ENCODE measurements at regions of chr16 and their contacts with region 1.

Region 1: GRCh38 chr16:76705892-76706291 is 428.7 kb downstream of the CNTNAP4 start:
- DNase-seq: no peak
- ATAC-seq: no peak
- H3K4me3 ChIP-seq: no peak overlapping the region
- H3K27ac ChIP-seq: no peak overlapping the region
- H3K4me1 ChIP-seq: no peaks in the 10 kb centered on the region
- H3K27me3 ChIP-seq: no peaks in the 10 kb centered on the region
- CTCF ChIP-seq: no peak
- POLR2A ChIP-seq: no peak
- RAD21 ChIP-seq: no peak

Region 2: GRCh38 chr16:76409706-76410105 is 296.2 kb before region 1 on chr16:
- CTCF ChIA-PET with region 1: no interaction called
- POLR2A ChIA-PET with region 1: no interaction called
- RAD21 ChIA-PET with region 1: no interaction called
- intact Hi-C with region 1: loop called (anchors 10 kb)
- DNase-seq: no peak
- ATAC-seq: no peak
- H3K4me3 ChIP-seq: no peak overlapping the region
- H3K27ac ChIP-seq: no peak overlapping the region
- H3K4me1 ChIP-seq: no peaks in the 10 kb centered on the region
- H3K27me3 ChIP-seq: no peaks in the 10 kb centered on the region
- CTCF ChIP-seq: no peak
- POLR2A ChIP-seq: no peak
- RAD21 ChIP-seq: no peak

Region 3: GRCh38 chr16:77059446-77059845 is 353.6 kb after region 1 on chr16:
- CTCF ChIA-PET with region 1: no interaction called
- POLR2A ChIA-PET with region 1: no interaction called
- RAD21 ChIA-PET with region 1: no interaction called
- intact Hi-C with region 1: no loop called
- DNase-seq: no peak
- ATAC-seq: no peak
- H3K4me3 ChIP-seq: no peak overlapping the region
- H3K27ac ChIP-seq: no peak overlapping the region
- H3K4me1 ChIP-seq: no peaks in the 10 kb centered on the region
- H3K27me3 ChIP-seq: no peaks in the 10 kb centered on the region; the same call in 1 of the 2 replicates
- CTCF ChIP-seq: no peak
- POLR2A ChIP-seq: no peak
- RAD21 ChIP-seq: no peak